AG04449 (cell line): ENCODE measurements at regions of chr17 and their contacts with region 1.

Region 1: GRCh38 chr17:50956750-50957523 is 90.8 kb upstream of the TOB1 start:
- DNase-seq: no peak
- H3K4me3 ChIP-seq: no peak overlapping the region
- CTCF ChIP-seq: peak; percentile 77

Region 2: GRCh38 chr17:50908860-50909764 is 47.8 kb before region 1 on chr17:
- CTCF ChIA-PET with region 1: no interaction called
- POLR2A ChIA-PET with region 1: no interaction called
- DNase-seq: no peak
- H3K4me3 ChIP-seq: no peak overlapping the region
- CTCF ChIP-seq: no peak

Region 3: GRCh38 chr17:50967795-50968194 is 10.9 kb after region 1 on chr17:
- CTCF ChIA-PET with region 1: interaction called, 40 read pairs
- POLR2A ChIA-PET with region 1: no interaction called
- DNase-seq: no peak
- H3K4me3 ChIP-seq: no peak overlapping the region
- CTCF ChIP-seq: no peak

Region 4: GRCh38 chr17:50976951-50977472 is 20.1 kb after region 1 on chr17:
- CTCF ChIA-PET with region 1: interaction called, 17 read pairs
- POLR2A ChIA-PET with region 1: no interaction called
- DNase-seq: no peak
- H3K4me3 ChIP-seq: no peak overlapping the region
- CTCF ChIP-seq: no peak